Activated CD4-positive, alpha-beta memory T cell treated with anti-CD3 and anti-CD28 coated beads for 36 hours (primary cell): ENCODE measurements at regions of chr16 and their contacts with region 1.

Region 1: GRCh38 chr16:82169861-82170845 is at the start of gene MPHOSPH6:
- DNase-seq: peak; percentile 93
- H3K4me3 Mint-ChIP-seq: peak within 1 kb of the TSS; percentile 96
- H3K27ac Mint-ChIP-seq: peak within 1 kb of the TSS; percentile 90
- H3K4me1 Mint-ChIP-seq: peaks cover 19% of the 10 kb centered on the region
- H3K27me3 Mint-ChIP-seq: peaks cover 14% of the 10 kb centered on the region
- total RNA-seq, gene MPHOSPH6: 36.0 to 37.0 TPM

Region 2: GRCh38 chr16:82011199-82011641 is 158.9 kb before region 1 on chr16 and contains the start of gene SDR42E1:
- CTCF ChIA-PET with region 1: no interaction called
- POLR2A ChIA-PET with region 1: no interaction called
- intact Hi-C with region 1: loop called (anchors 2 kb)
- DNase-seq: peak; percentile 76
- H3K4me3 Mint-ChIP-seq: peak within 1 kb of the TSS; percentile 79
- H3K27ac Mint-ChIP-seq: peak within 1 kb of the TSS; percentile 84
- H3K4me1 Mint-ChIP-seq: peaks cover 19% of the 10 kb centered on the region
- H3K27me3 Mint-ChIP-seq: peaks cover 7% of the 10 kb centered on the region
- total RNA-seq, gene SDR42E1: 4.1 to 4.9 TPM

Region 3: GRCh38 chr16:82070656-82071369 is 99.3 kb before region 1 on chr16:
- CTCF ChIA-PET with region 1: no interaction called
- POLR2A ChIA-PET with region 1: no interaction called
- intact Hi-C with region 1: no loop called
- DNase-seq: no peak
- H3K4me3 Mint-ChIP-seq: no peak overlapping the region
- H3K27ac Mint-ChIP-seq: no peak overlapping the region
- H3K4me1 Mint-ChIP-seq: peaks cover 8% of the 10 kb centered on the region
- H3K27me3 Mint-ChIP-seq: peaks cover 25% of the 10 kb centered on the region

Region 4: GRCh38 chr16:82192665-82193064 is 22.5 kb after region 1 on chr16:
- CTCF ChIA-PET with region 1: no interaction called
- POLR2A ChIA-PET with region 1: interaction called, 9 read pairs
- intact Hi-C with region 1: loop called (anchors 1 kb)
- DNase-seq: peak; percentile 58
- H3K4me3 Mint-ChIP-seq: no peak overlapping the region
- H3K27ac Mint-ChIP-seq: peak overlapping the region; percentile 59
- H3K4me1 Mint-ChIP-seq: peaks cover 25% of the 10 kb centered on the region
- H3K27me3 Mint-ChIP-seq: peaks cover 14% of the 10 kb centered on the region